MCF 10A (cell line): ENCODE measurements at regions of chr11 and their contacts with region 1.

Region 1: GRCh38 chr11:108697872-108698473 is 33.1 kb downstream of the DDX10 start:
- DNase-seq: peak; percentile 78
- H3K4me3 Mint-ChIP-seq: no peak overlapping the region
- H3K27ac Mint-ChIP-seq: peak overlapping the region; percentile 82
- H3K4me1 Mint-ChIP-seq: peaks cover 17% of the 10 kb centered on the region
- H3K27me3 Mint-ChIP-seq: no peaks in the 10 kb centered on the region
- CTCF ChIP-seq: peak; percentile 93

Region 2: DNA sequence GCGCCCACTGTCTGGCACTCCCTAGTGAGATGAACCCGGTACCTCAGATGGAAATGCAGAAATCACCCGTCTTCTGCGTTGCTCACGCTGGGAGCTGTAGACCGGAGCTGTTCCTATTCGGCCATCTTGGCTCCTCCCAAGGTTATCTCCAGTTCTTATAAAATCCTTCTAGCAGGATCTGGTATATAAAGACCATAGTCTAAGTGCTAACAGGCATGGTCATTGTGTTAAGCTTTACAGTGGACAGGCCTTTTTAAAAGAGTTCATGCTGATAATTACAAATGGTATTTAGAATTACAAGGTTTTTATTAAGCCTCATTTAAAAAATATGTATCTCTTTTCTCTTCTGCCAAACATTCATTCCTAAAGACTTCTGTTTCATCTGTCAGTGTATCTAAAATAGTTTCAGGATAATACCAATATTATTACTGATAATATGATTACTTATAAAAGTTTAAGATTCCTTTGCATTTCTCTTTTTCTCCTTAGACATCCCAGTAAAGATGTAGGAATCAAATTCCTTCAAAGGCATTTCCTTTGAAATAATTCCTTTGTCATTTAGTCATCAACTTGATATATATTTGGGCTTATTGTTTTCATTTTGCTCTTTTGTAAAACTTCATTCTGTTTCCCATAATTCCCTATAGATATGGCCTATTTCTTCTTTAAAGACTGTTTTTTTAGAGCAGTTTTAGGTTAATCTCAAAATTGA is 12.4 kb before region 1 on chr11:
- CTCF ChIA-PET with region 1: no interaction called
- POLR2A ChIA-PET with region 1: no interaction called
- intact Hi-C with region 1: no loop called
- DNase-seq: no peak
- H3K4me3 Mint-ChIP-seq: no peak overlapping the region
- H3K27ac Mint-ChIP-seq: no peak overlapping the region
- H3K4me1 Mint-ChIP-seq: no peaks in the 10 kb centered on the region
- H3K27me3 Mint-ChIP-seq: no peaks in the 10 kb centered on the region
- CTCF ChIP-seq: no peak

Region 3: DNA sequence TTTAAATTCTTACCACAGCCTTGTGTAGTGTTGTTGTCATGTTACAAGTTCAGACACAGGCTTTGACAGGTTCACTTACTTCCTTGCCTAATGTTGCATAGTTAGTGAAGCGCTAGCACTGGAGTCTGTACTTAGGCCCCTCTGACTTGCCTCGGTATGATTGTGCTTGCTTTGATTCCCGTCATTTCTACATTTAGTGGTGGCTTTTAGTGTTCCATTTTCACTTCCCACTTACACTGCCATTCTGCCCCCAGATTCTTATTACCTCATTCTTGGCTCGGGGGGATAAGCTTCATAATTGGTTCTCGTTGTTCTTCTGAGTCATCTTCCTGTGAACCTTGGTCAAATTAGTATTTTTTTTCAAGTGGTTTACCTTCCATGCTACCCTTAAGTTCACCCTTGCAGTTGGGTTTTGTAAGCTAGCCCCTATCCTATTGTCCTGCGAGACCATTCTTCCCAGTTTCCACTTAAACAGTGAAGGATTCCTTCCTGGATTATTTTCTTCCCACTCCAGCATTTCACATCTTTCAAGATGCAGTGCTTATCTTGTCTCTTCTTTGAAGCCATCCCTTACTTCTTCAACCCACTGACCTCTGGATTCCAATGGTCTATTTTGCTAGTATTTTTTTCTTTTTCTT is 35.6 kb after region 1 on chr11:
- CTCF ChIA-PET with region 1: interaction called, 15 read pairs
- POLR2A ChIA-PET with region 1: interaction called, 3 read pairs
- intact Hi-C with region 1: no loop called
- DNase-seq: peak; percentile 68
- H3K4me3 Mint-ChIP-seq: no peak overlapping the region
- H3K27ac Mint-ChIP-seq: no peak overlapping the region
- H3K4me1 Mint-ChIP-seq: peaks cover 18% of the 10 kb centered on the region
- H3K27me3 Mint-ChIP-seq: no peaks in the 10 kb centered on the region
- CTCF ChIP-seq: no peak

Region 4: GRCh38 chr11:108929241-108929640 is 231.3 kb after region 1 on chr11:
- CTCF ChIA-PET with region 1: interaction called, 5 read pairs
- POLR2A ChIA-PET with region 1: no interaction called
- intact Hi-C with region 1: loop called (anchors 1 kb)
- DNase-seq: peak; percentile 86
- H3K4me3 Mint-ChIP-seq: peak overlapping the region; percentile 46
- H3K27ac Mint-ChIP-seq: peak overlapping the region; percentile 97
- H3K4me1 Mint-ChIP-seq: peaks cover 54% of the 10 kb centered on the region
- H3K27me3 Mint-ChIP-seq: no peaks in the 10 kb centered on the region
- CTCF ChIP-seq: no peak

Region 5: GRCh38 chr11:109697140-109697843 is 999.3 kb after region 1 on chr11:
- CTCF ChIA-PET with region 1: interaction called, 16 read pairs
- POLR2A ChIA-PET with region 1: interaction called, 6 read pairs
- intact Hi-C with region 1: loop called (anchors 1 kb)
- DNase-seq: peak; percentile 69
- H3K4me3 Mint-ChIP-seq: no peak overlapping the region
- H3K27ac Mint-ChIP-seq: peak overlapping the region; percentile 72
- H3K4me1 Mint-ChIP-seq: peaks cover 6% of the 10 kb centered on the region
- H3K27me3 Mint-ChIP-seq: no peaks in the 10 kb centered on the region
- CTCF ChIP-seq: peak; percentile 60

Region 6: DNA sequence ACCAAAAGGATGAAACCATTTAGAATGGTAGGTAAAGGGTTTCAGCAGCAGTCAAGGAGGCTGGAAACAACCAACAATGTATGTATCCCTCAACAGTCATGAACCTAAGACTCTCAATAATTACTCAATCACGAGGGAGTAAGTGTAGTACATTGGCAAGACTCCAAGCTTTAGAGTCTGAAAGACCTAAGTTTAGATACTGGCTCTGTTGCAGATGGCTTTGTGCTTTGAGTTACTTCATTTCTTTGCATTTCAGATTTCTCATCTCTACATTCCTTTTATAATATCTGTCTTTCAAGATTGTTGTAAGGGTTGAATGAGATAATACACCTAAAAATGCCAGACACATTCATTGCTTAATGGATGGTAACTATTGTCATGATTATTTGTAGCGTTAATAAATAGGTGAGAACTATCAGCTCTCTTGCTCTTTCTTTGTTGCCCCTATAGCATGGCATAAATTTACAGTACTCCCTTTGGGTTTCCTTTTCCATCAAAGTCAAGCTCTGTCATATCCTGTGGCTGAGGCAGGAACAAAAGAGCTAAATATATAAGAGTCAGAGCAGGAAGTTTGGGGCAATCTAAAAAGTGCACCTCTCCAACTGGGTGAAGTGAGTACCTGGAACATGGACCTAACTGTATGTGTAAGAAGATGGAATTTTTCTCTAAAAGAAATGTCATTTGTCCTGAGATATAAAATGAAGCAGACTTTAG is 1167.0 kb after region 1 on chr11:
- CTCF ChIA-PET with region 1: no interaction called
- POLR2A ChIA-PET with region 1: no interaction called
- intact Hi-C with region 1: loop called (anchors 5 kb)
- DNase-seq: peak; percentile 65
- H3K4me3 Mint-ChIP-seq: no peak overlapping the region
- H3K27ac Mint-ChIP-seq: no peak overlapping the region
- H3K4me1 Mint-ChIP-seq: no peaks in the 10 kb centered on the region
- H3K27me3 Mint-ChIP-seq: no peaks in the 10 kb centered on the region
- CTCF ChIP-seq: no peak